Aorta (tissue), 5 donors: ENCODE measurements at regions of chr1 and their contacts with region 1.

Region 1: GRCh38 chr1:158509471-158510156 is 37.6 kb downstream of the OR10R2 start:
- DNase-seq: peak in 1 of 2 donors; percentile 49
- ATAC-seq: peak; percentile 77
- H3K4me3 ChIP-seq: no peak overlapping the region
- H3K27ac ChIP-seq: no peak overlapping the region
- H3K4me1 ChIP-seq: peaks cover 0 to 4% of the 10 kb centered on the region in 2 donors
- H3K27me3 ChIP-seq: no peaks in the 10 kb centered on the region

Region 2: GRCh38 chr1:158180741-158181576 is 328.7 kb before region 1 on chr1 and contains the start of gene CD1D:
- intact Hi-C with region 1: loop called in 1 of 2 experiments (anchors 10 kb)
- DNase-seq: peak; percentile 51 to 81
- ATAC-seq: peak; percentile 37
- H3K4me3 ChIP-seq: peak within 1 kb of the TSS; percentile 6 to 29
- H3K27ac ChIP-seq: no peak within 1 kb of the TSS
- H3K4me1 ChIP-seq: peaks cover 0 to 4% of the 10 kb centered on the region in 2 donors
- H3K27me3 ChIP-seq: no peaks in the 10 kb centered on the region
- total RNA-seq, gene CD1D: 2.0 to 3.3 TPM